A673 (cell line): ENCODE measurements at regions of chr3 and their contacts with region 1.

Region 1: GRCh38 chr3:45037734-45038455 is 11.8 kb downstream of the CLEC3B start:
- DNase-seq: peak; percentile 89
- H3K4me3 ChIP-seq: no peak overlapping the region
- H3K27ac ChIP-seq: no peak overlapping the region
- H3K4me1 ChIP-seq: no peaks in the 10 kb centered on the region
- H3K27me3 ChIP-seq: no peaks in the 10 kb centered on the region
- CTCF ChIP-seq: peak; percentile 79

Region 2: DNA sequence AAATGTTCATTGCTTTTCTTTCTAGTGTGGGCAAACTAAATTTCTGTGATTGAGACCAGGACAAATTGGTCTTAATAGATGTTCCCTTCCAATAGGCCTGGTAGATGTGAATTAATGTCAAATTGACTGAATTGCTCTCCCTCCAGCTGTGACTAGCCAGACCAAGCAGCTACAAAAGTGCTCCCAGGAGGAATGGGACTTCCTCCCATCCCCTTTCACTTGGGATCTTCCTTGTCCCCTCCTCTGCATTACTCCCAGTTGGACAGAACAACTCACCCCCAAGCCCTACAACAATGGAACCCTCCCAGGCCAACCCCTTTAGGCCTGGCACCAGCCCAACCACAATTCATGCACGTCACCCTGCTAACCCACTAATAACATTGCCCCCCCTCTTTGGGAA is 502.5 kb before region 1 on chr3:
- CTCF ChIA-PET with region 1: no interaction called
- POLR2A ChIA-PET with region 1: no interaction called
- intact Hi-C with region 1: loop called (anchors 5 kb)
- DNase-seq: no peak
- H3K4me3 ChIP-seq: no peak overlapping the region
- H3K27ac ChIP-seq: no peak overlapping the region
- H3K4me1 ChIP-seq: no peaks in the 10 kb centered on the region
- H3K27me3 ChIP-seq: no peaks in the 10 kb centered on the region
- CTCF ChIP-seq: no peak

Region 3: GRCh38 chr3:45499529-45499928 is 461.6 kb after region 1 on chr3:
- CTCF ChIA-PET with region 1: interaction called, 7 read pairs
- POLR2A ChIA-PET with region 1: no interaction called
- intact Hi-C with region 1: loop called (anchors 2 kb)
- DNase-seq: peak; percentile 34
- H3K4me3 ChIP-seq: no peak overlapping the region
- H3K27ac ChIP-seq: no peak overlapping the region
- H3K4me1 ChIP-seq: peaks cover 31% of the 10 kb centered on the region
- H3K27me3 ChIP-seq: no peaks in the 10 kb centered on the region
- CTCF ChIP-seq: peak; percentile 49; the same call in 1 of the 2 replicates

Region 4: GRCh38 chr3:45656575-45657363 is 618.9 kb after region 1 on chr3:
- CTCF ChIA-PET with region 1: interaction called, 5 read pairs
- POLR2A ChIA-PET with region 1: no interaction called
- intact Hi-C with region 1: loop called (anchors 2 kb)
- DNase-seq: peak; percentile 87
- H3K4me3 ChIP-seq: no peak overlapping the region
- H3K27ac ChIP-seq: no peak overlapping the region
- H3K4me1 ChIP-seq: peaks cover 4% of the 10 kb centered on the region
- H3K27me3 ChIP-seq: no peaks in the 10 kb centered on the region
- CTCF ChIP-seq: peak; percentile 68

Region 5: GRCh38 chr3:46208167-46208704 is 1170.3 kb after region 1 on chr3 and contains the start of gene CCR1:
- CTCF ChIA-PET with region 1: no interaction called
- POLR2A ChIA-PET with region 1: no interaction called
- intact Hi-C with region 1: loop called (anchors 10 kb)
- DNase-seq: peak; percentile 27
- H3K4me3 ChIP-seq: no peak within 1 kb of the TSS
- H3K27ac ChIP-seq: no peak within 1 kb of the TSS
- H3K4me1 ChIP-seq: no peaks in the 10 kb centered on the region
- H3K27me3 ChIP-seq: no peaks in the 10 kb centered on the region
- CTCF ChIP-seq: peak; percentile 57
- total RNA-seq, gene CCR1: not detected in 2 replicates